Calu3 (cell line): ENCODE measurements at regions of chr10 and their contacts with region 1.

Region 1: DNA sequence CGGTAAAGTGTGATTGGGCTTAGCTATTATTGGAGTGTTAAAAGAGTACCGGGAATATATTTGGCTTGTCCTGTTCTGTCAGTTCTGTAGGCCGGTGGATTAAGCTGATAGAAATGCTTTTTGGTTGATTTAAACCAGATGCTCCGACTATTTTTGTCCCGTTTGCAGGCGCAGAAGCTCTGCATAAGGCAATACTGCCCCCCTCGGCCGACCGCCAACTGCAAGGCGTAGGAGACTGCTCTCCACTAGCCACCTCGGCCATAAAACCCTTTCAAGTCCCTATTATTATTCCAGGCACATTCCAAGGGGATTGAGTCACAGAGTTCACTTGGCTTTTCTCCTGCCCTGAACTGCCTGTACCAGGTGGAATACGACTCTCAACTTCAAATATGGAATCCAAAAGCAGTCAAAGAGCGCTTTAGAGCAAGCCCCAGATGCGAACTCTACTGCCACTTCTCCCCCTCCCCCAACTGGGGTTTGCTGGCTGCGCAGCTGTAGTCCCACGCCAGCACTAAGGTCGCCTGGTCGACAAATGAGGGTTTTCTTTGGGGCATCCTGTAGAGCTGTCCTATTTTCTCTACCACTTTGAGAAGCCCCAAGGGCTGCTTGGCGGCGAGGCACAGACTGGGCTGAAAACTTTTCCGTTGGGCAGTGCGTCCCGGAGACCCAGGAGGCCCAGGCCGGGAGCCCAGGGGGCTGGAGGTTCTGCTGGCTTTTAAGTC is 108.3 kb downstream of the REEP3 start:
- DNase-seq: peak; percentile 97
- H3K4me3 Mint-ChIP-seq: peak overlapping the region; percentile 98
- H3K27ac Mint-ChIP-seq: peak overlapping the region; percentile 95
- H3K4me1 Mint-ChIP-seq: peaks cover 48% of the 10 kb centered on the region
- H3K27me3 Mint-ChIP-seq: no peaks in the 10 kb centered on the region
- CTCF ChIP-seq: peak; percentile 81

Region 2: GRCh38 chr10:63217120-63217605 is 412.4 kb before region 1 on chr10:
- CTCF ChIA-PET with region 1: interaction called, 3 read pairs
- intact Hi-C with region 1: loop called (anchors 1 kb)
- DNase-seq: peak; percentile 31
- H3K4me3 Mint-ChIP-seq: no peak overlapping the region
- H3K27ac Mint-ChIP-seq: no peak overlapping the region
- H3K4me1 Mint-ChIP-seq: peaks cover 53% of the 10 kb centered on the region
- H3K27me3 Mint-ChIP-seq: no peaks in the 10 kb centered on the region
- CTCF ChIP-seq: peak; percentile 49

Region 3: DNA sequence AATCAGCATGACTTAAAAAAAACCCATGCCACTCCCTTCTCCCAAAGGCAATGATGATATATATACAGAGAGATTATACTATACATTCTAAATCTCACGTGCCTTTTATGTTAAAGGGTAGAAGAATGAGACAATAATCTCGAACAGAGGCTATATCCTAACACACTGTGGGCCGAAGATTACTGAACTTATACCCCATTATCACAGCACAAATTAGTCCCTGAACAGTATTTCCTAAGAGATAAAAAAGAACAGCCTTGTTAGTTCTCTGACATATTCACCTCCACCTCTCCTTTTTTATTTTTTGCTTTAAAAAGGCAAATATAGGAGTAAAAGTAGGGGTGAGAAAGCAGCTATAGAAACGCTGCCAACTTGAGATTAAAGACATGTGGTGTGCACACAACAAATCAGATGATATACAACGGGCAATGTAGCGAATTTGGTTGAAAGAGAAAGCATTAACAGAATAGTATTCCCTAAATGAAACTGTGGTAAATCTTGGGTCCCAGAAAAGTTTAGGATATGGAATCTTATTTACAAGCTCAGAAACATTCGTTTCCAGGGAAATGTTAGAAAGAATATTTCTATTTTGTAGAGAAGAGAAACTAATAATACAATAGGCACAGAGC is 233.3 kb before region 1 on chr10:
- CTCF ChIA-PET with region 1: no interaction called
- intact Hi-C with region 1: no loop called
- DNase-seq: no peak
- H3K4me3 Mint-ChIP-seq: no peak overlapping the region
- H3K27ac Mint-ChIP-seq: no peak overlapping the region
- H3K4me1 Mint-ChIP-seq: no peaks in the 10 kb centered on the region
- H3K27me3 Mint-ChIP-seq: no peaks in the 10 kb centered on the region
- CTCF ChIP-seq: no peak

Region 4: DNA sequence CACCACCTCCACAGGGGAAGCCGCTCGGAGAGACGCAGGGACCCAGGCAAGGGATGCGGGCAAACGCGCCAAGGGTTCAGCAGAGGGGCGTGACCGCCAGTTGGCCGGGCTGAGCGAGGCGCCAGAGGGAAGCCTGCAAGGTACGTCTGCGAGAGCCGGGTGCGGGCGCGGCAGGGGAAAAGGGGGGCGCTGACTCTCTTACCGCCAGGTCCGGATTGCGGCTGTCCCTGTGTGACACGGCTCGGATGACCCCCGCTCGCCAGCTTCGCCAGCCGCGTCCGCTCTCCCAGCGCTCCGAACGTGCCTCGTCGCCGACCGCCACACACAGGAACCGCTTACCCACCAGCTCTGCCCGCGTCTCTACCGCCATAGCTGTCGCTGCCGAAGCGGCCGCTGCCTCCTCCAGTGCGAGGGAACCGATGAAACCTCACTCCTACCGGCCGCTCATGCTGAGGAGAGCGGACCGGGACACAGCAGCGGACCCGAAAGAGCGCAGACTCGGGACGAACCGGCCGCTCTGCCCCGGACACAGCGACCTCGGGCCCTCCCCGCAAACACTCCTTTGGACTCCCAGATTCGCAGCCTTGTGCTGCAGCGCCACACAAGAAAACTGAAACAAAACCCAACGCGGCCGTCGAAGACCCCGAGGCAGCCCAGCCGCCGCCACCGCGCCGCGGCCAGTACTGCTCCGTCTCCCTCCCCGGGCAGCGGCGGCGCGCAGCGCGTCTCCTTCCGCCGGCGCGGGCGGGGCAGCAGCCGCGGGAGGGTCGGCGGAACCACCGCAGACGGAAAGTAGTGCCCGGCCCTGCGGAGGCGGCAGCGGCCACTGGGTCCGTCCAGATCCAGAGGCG is 164.0 kb before region 1 on chr10 and contains the start of gene JMJD1C:
- CTCF ChIA-PET with region 1: no interaction called
- intact Hi-C with region 1: loop called (anchors 2 kb)
- DNase-seq: peak; percentile 92
- H3K4me3 Mint-ChIP-seq: peak within 1 kb of the TSS; percentile 99
- H3K27ac Mint-ChIP-seq: peak within 1 kb of the TSS; percentile 92
- H3K4me1 Mint-ChIP-seq: peaks cover 32% of the 10 kb centered on the region
- H3K27me3 Mint-ChIP-seq: no peaks in the 10 kb centered on the region
- CTCF ChIP-seq: no peak
- total RNA-seq, gene JMJD1C: 67.6 and 73.1 TPM in 2 replicates

Region 5: GRCh38 chr10:63554657-63555056 is 74.9 kb before region 1 on chr10:
- CTCF ChIA-PET with region 1: interaction called, 5 read pairs
- intact Hi-C with region 1: loop called (anchors 1 kb)
- DNase-seq: peak; percentile 79
- H3K4me3 Mint-ChIP-seq: peak overlapping the region; percentile 56
- H3K27ac Mint-ChIP-seq: peak overlapping the region; percentile 98
- H3K4me1 Mint-ChIP-seq: peaks cover 63% of the 10 kb centered on the region
- H3K27me3 Mint-ChIP-seq: no peaks in the 10 kb centered on the region
- CTCF ChIP-seq: no peak

Region 6: DNA sequence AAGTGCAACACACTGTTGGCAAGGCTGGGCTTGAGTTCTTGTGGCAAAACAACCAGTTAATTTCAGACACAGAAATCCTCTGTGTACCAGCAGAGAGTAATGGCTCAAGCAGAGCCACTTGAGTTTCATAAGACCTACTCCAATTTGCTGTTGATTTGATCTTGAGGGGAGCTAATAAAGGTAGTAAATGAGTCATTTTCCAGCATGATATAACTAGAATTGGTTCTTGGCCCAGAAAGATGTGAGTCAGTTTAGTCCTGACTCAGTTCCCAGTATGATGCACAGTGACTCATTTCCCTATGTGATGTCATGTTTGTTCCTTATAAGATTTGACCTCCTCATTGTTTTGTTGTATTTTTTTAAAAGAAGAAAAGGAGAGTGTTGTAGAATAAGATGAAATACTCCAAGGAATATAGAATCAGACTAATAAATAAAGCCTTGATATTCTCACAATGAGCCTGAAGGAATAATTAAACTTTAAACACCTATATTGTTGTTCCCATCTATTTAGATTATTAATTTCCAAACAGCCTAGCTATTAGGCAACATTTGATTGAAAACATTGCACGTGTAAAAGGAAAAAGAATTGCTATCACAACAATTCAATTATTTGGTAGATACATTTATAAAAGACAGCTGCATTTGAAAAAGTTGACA is 77.9 kb after region 1 on chr10:
- CTCF ChIA-PET with region 1: interaction called, 24 read pairs
- intact Hi-C with region 1: loop called (anchors 2 kb)
- DNase-seq: peak; percentile 61
- H3K4me3 Mint-ChIP-seq: no peak overlapping the region
- H3K27ac Mint-ChIP-seq: peak overlapping the region; percentile 87
- H3K4me1 Mint-ChIP-seq: peaks cover 77% of the 10 kb centered on the region
- H3K27me3 Mint-ChIP-seq: no peaks in the 10 kb centered on the region
- CTCF ChIP-seq: no peak